CD8-positive, alpha-beta T cell (primary cell): ENCODE measurements at regions of chr1 and their contacts with region 1.

Region 1: GRCh38 chr1:119962296-119962968 is 66.1 kb upstream of the ADAM30 start:
- DNase-seq: no peak
- ATAC-seq: no peak
- H3K4me3 ChIP-seq: no peak overlapping the region
- H3K4me3 Mint-ChIP-seq: no peak overlapping the region
- H3K27ac ChIP-seq: no peak overlapping the region
- H3K27ac Mint-ChIP-seq: no peak overlapping the region
- H3K4me1 ChIP-seq: no peaks in the 10 kb centered on the region
- H3K4me1 Mint-ChIP-seq: no peaks in the 10 kb centered on the region
- H3K27me3 ChIP-seq: no peaks in the 10 kb centered on the region
- H3K27me3 Mint-ChIP-seq: no peaks in the 10 kb centered on the region
- CTCF ChIP-seq: no peak

Region 2: DNA sequence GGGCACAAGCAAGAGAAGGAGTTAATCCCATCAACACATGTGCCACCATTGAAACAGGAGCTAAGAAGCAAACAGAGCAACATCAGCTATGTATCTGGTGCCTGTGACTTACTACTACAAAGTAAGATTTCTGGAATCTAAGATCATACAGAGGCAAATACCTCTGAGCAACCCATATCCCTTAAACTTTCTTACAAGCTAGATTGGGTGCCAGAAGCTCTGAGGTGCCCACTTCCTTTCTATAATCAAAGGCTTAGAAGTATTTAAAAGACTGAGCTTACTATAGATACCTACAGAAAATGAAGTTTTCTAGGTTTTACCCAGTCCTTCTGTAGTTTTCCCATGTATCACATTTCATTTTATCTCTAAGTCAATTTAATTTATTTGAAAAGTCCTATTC is 21.7 kb before region 1 on chr1:
- CTCF ChIA-PET with region 1: interaction called, 4 read pairs
- POLR2A ChIA-PET with region 1: no interaction called
- intact Hi-C with region 1: loop called in 1 of 2 experiments (anchors 2 kb)
- DNase-seq: peak in 1 of 9 experiments; percentile 19
- ATAC-seq: peak; percentile 38
- H3K4me3 ChIP-seq: no peak overlapping the region
- H3K4me3 Mint-ChIP-seq: no peak overlapping the region
- H3K27ac ChIP-seq: no peak overlapping the region
- H3K27ac Mint-ChIP-seq: no peak overlapping the region
- H3K4me1 ChIP-seq: peaks cover 10% of the 10 kb centered on the region
- H3K4me1 Mint-ChIP-seq: peaks cover 11% of the 10 kb centered on the region
- H3K27me3 ChIP-seq: no peaks in the 10 kb centered on the region
- H3K27me3 Mint-ChIP-seq: no peaks in the 10 kb centered on the region
- CTCF ChIP-seq: no peak